Heart left ventricle (tissue), 16 donors: ENCODE measurements at regions of chr9 and their contacts with region 1.

Region 1: DNA sequence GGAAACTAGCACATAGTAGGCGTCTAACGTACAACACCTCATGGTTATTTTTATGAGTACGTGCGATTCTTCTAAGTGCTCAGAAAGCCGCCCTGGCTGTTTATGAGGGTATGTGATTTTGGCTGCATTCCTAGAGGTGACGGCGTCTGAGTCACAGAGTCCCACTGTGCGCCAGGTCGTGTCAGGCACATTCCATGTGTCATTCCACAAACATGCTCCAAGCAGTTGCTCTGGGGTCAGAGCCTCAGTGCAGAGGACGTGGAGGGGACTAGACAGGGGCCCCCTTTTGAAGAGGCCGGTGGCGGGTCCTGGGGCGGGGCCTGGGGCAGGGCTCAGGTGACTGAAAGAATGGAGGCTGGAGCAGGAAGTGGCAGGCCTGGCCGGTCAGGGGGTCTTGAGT is 51.9 kb downstream of the NEK6 start:
- DNase-seq: no peak
- ATAC-seq: peak in 3 of 4 donors; percentile 56 to 78 (median 73)
- H3K4me3 ChIP-seq: no peak overlapping the region
- H3K27ac ChIP-seq: no peak overlapping the region
- H3K4me1 ChIP-seq: peaks cover 0 to 9% (median 0%) of the 10 kb centered on the region in 12 donors
- H3K27me3 ChIP-seq: no peaks in the 10 kb centered on the region
- CTCF ChIP-seq: no peak
- POLR2A ChIP-seq: no peak

Region 2: GRCh38 chr9:124254261-124254682 is 55.4 kb before region 1 on chr9:
- intact Hi-C with region 1: no loop called
- DNase-seq: no peak
- ATAC-seq: no peak
- H3K4me3 ChIP-seq: no peak overlapping the region
- H3K27ac ChIP-seq: no peak overlapping the region
- H3K4me1 ChIP-seq: peaks cover 0 to 41% (median 8%) of the 10 kb centered on the region in 12 donors
- H3K27me3 ChIP-seq: no peaks in the 10 kb centered on the region
- CTCF ChIP-seq: no peak
- POLR2A ChIP-seq: no peak

Region 3: GRCh38 chr9:124267271-124267807 is 42.3 kb before region 1 on chr9:
- intact Hi-C with region 1: loop called in 1 of 10 experiments (anchors 10 kb)
- DNase-seq: no peak
- ATAC-seq: peak; percentile 22 to 57 (median 44)
- H3K4me3 ChIP-seq: peak overlapping the region in 1 of 12 donors; percentile 9
- H3K27ac ChIP-seq: peak overlapping the region in 4 of 12 donors; percentile 3 to 55 (median 48)
- H3K4me1 ChIP-seq: peaks cover 0 to 87% (median 37%) of the 10 kb centered on the region in 12 donors
- H3K27me3 ChIP-seq: no peaks in the 10 kb centered on the region
- CTCF ChIP-seq: peak in 3 of 12 donors; percentile 6 to 10 (median 7)
- POLR2A ChIP-seq: no peak